Spleen (tissue), 13 donors: ENCODE measurements at regions of chr1 and their contacts with region 1.

Region 1: DNA sequence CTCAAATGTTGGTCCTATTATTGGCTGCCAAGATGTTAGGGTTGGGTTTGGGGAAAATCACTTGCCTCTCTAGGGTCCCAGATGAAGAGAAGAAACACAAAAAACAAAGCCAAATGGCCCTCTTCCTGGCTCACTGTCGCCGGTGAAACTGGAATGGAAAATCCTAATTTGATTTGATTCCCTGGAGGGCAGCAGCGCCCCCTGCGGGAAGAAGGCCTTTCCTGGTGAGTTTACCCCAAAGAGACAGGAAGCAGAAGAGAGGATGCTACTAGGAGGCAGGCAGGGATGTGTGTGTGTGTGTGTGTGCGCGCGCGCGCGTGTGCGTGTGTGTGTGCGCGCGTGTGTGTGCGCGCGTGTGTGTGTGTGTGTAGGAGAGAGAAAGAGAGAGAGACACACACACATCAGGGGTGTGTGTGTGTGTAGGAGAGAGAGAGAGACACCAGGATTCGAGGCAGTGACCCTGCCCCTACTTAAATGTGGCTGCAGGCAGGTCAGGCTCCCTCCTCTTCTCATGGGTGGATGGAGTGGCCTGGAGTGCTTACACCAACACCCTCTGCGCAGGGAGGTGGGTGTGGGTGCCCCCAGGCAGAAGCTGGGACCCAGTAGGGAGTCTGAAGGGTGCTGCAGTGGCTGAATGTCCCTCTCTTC is 3.1 kb upstream of the SELENON start:
- DNase-seq: peak; percentile 89
- H3K4me3 ChIP-seq: no peak overlapping the region
- H3K27ac ChIP-seq: peak overlapping the region in 5 of 8 donors; percentile 24 to 59 (median 50)
- H3K4me1 ChIP-seq: peaks cover 15 to 61% (median 39%) of the 10 kb centered on the region in 6 donors
- H3K27me3 ChIP-seq: no peaks in the 10 kb centered on the region
- CTCF ChIP-seq: peak; percentile 62 to 87 (median 75)
- POLR2A ChIP-seq: no peak

Region 2: GRCh38 chr1:25503551-25504426 is 293.1 kb before region 1 on chr1:
- intact Hi-C with region 1: loop called (anchors 5 kb)
- DNase-seq: peak; percentile 87
- H3K4me3 ChIP-seq: no peak overlapping the region
- H3K27ac ChIP-seq: peak overlapping the region in 4 of 8 donors; percentile 9 to 40 (median 37)
- H3K4me1 ChIP-seq: peaks cover 0 to 26% (median 11%) of the 10 kb centered on the region in 6 donors
- H3K27me3 ChIP-seq: peaks cover 0 to 9% (median 0%) of the 10 kb centered on the region in 7 donors
- CTCF ChIP-seq: peak; percentile 18 to 74 (median 65)
- POLR2A ChIP-seq: no peak

Region 3: DNA sequence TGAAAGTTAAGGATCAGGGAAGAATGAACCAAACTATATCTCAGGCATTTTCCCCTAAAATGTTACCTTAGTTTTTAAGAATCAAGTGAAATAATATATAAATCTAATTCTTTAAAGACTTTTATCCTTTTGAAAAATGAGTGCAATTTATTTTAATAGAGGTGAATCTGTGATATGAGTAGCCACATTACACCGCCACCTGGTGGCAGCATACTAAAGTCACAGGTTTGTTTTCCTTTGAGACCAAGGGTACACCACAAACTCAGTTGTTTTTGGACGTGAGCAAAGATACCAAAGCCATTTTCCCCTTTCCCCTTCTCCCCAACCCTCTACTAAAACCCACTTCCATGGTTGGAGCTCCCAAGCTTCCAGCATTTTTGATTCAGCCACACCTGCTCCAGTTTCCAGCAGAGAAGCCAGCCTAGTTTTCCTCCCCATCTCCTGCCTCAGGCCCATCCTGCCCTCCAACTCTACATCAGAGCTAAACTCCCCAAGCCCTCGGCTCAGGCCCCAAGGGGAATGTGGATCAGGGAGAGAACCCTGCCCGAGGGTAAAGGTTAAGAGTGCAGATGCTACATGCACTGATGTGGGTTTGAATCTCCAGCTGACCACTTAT is 276.4 kb before region 1 on chr1:
- intact Hi-C with region 1: loop called (anchors 10 kb)
- DNase-seq: peak; percentile 83
- H3K4me3 ChIP-seq: no peak overlapping the region
- H3K27ac ChIP-seq: peak overlapping the region in 3 of 8 donors; percentile 46 to 62 (median 55)
- H3K4me1 ChIP-seq: peaks cover 0 to 12% (median 3%) of the 10 kb centered on the region in 6 donors
- H3K27me3 ChIP-seq: no peaks in the 10 kb centered on the region
- CTCF ChIP-seq: peak; percentile 70 to 86 (median 75)
- POLR2A ChIP-seq: no peak

Region 4: DNA sequence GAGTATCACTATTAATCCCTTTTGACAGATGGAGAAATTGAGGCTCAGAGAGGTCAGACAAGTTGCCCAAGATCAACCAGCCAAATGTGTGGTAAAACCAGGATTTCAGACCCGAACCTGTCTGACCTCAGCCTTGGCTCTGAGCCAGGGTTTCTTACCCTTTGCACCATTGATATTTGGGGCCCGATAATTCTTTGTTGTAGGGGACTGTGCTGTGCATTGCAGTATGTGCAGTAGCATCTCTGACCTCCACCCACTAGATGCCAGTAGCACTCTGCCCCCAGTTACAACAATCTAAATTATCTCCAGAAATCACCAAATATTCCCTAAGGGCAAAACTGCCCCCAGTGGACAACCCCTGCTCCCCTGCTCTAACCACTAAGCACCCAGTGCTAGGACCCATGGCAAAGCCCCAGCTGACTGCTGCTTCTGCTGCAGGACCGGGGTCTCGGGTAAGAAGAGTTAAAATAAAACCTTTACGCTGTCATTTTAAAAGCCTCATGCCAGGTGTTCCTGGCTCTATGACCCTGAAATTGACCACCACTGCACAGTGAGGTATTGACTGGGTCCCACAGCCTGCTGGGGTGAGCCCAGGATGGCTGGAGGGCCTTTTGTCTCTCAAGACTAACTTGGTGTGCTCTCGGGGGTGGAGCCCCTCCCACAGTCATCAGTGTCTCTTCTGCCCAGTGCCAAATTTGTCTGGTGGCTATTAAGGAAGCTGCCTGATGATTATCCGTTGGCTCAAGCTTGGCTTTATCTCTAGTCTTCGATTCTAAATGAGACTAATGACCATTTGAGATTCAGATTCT is 185.9 kb before region 1 on chr1:
- intact Hi-C with region 1: loop called (anchors 5 kb)
- DNase-seq: no peak
- H3K4me3 ChIP-seq: no peak overlapping the region
- H3K27ac ChIP-seq: no peak overlapping the region
- H3K4me1 ChIP-seq: peaks cover 9 to 54% (median 40%) of the 10 kb centered on the region in 6 donors
- H3K27me3 ChIP-seq: peaks cover 0 to 7% (median 0%) of the 10 kb centered on the region in 7 donors
- CTCF ChIP-seq: peak in 2 of 11 experiments; percentile 3 to 33
- POLR2A ChIP-seq: no peak